CD14-positive monocyte (primary cell): ENCODE measurements at regions of chr9 and their contacts with region 1.

Region 1: GRCh38 chr9:70504834-70505233 is 90.4 kb upstream of the KLF9 start:
- DNase-seq: peak in 2 of 3 donors; percentile 41 to 50
- H3K4me3 ChIP-seq: no peak overlapping the region
- H3K4me3 Mint-ChIP-seq: no peak overlapping the region
- H3K27ac ChIP-seq: no peak overlapping the region
- H3K27ac Mint-ChIP-seq: peak overlapping the region in 1 of 7 donors; percentile 61
- H3K4me1 ChIP-seq: peaks cover 13 to 25% of the 10 kb centered on the region in 2 donors
- H3K4me1 Mint-ChIP-seq: peaks cover 29% of the 10 kb centered on the region
- H3K27me3 ChIP-seq: no peaks in the 10 kb centered on the region
- H3K27me3 Mint-ChIP-seq: peaks cover 0 to 2% (median 0%) of the 10 kb centered on the region in 3 donors
- CTCF ChIP-seq: no peak

Region 2: GRCh38 chr9:70451765-70452164 is 53.1 kb before region 1 on chr9:
- intact Hi-C with region 1: no loop called
- DNase-seq: no peak
- H3K4me3 ChIP-seq: no peak overlapping the region
- H3K4me3 Mint-ChIP-seq: no peak overlapping the region
- H3K27ac ChIP-seq: no peak overlapping the region
- H3K27ac Mint-ChIP-seq: no peak overlapping the region
- H3K4me1 ChIP-seq: no peaks in the 10 kb centered on the region
- H3K4me1 Mint-ChIP-seq: no peaks in the 10 kb centered on the region
- H3K27me3 ChIP-seq: no peaks in the 10 kb centered on the region
- H3K27me3 Mint-ChIP-seq: peaks cover 0 to 3% (median 2%) of the 10 kb centered on the region in 3 donors
- CTCF ChIP-seq: no peak

Region 3: GRCh38 chr9:70553707-70554673 is 49.2 kb after region 1 on chr9:
- intact Hi-C with region 1: loop called in 1 of 2 experiments (anchors 10 kb)
- DNase-seq: peak in 1 of 3 donors; percentile 62
- H3K4me3 ChIP-seq: no peak overlapping the region
- H3K4me3 Mint-ChIP-seq: no peak overlapping the region
- H3K27ac ChIP-seq: no peak overlapping the region
- H3K27ac Mint-ChIP-seq: peak overlapping the region in 4 of 7 donors; percentile 15 to 54 (median 36)
- H3K4me1 ChIP-seq: peaks cover 34 to 37% of the 10 kb centered on the region in 2 donors
- H3K4me1 Mint-ChIP-seq: peaks cover 49% of the 10 kb centered on the region
- H3K27me3 ChIP-seq: no peaks in the 10 kb centered on the region
- H3K27me3 Mint-ChIP-seq: peaks cover 0 to 8% (median 0%) of the 10 kb centered on the region in 3 donors
- CTCF ChIP-seq: no peak